ENCODE measurements at regions of chr7 and their contacts with region 1.

Region 1: DNA sequence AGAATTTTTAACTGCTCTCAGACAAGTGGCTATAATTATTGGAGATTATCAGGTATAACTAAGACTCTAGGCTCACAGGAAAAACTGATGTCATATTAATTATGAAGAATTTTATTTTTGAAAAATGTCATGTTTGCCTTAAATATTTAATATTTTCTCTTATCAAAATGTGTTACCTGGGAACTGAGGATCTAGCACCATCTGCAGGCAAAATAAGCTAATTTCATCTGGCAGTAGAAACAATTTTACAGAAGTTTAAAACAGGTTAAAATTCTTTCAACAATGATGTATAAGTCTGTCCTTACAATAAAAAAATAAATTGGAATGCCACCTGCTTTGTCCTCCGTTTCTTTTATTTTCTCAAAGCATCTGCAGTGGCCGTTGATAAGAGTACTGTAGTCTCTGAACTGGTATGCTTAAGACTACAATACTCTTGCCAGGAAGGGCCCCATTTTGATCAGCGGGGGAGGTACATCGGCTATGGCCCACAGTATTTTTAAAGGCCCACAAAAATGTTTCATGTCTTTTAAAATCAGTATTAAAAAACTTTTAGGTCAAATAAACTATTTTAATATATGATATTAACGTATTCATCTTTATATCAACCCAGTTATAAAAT is 81.3 kb downstream of the VWDE start:
- DNase-seq: peak in 4 of 14 experiments; percentile 33 to 65 (median 56)
- ATAC-seq: no peak
- H3K4me3 ChIP-seq: no peak overlapping the region
- H3K4me3 Mint-ChIP-seq: no peak overlapping the region
- H3K27ac ChIP-seq: no peak overlapping the region
- H3K27ac Mint-ChIP-seq: no peak overlapping the region
- H3K4me1 ChIP-seq: no peaks in the 10 kb centered on the region
- H3K4me1 Mint-ChIP-seq: no peaks in the 10 kb centered on the region
- H3K27me3 ChIP-seq: no peaks in the 10 kb centered on the region
- H3K27me3 Mint-ChIP-seq: no peaks in the 10 kb centered on the region
- CTCF ChIP-seq: peak; percentile 86

Region 2: DNA sequence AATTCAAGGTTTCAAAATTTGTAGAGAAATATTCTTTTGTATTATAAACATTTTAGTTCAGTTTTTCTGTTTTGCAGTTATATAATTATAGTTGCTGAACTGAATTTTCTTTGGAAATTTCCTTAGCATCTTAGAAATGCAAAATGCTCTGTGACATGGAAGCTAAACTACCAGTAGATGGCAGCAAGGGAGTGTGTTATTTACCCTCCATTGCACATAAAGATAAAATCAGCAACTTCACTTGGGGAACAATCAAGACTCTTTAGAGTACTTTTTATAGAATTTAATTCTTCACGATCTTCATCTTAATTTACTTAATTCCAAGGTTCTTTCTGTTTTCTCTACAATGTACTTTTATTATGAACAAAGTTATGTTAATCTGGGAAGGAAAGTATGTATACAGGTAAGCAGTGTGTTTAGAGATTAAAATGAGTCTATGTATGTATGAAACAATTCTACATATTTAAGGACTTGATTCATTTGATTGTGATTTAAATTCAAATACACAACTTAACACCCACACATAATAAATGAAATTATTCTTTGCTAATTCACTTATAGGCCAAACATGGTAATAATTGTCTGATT is 894.6 kb before region 1 on chr7:
- CTCF ChIA-PET with region 1: no interaction called
- POLR2A ChIA-PET with region 1: no interaction called
- intact Hi-C with region 1: loop called in 1 of 2 experiments (anchors 5 kb)
- DNase-seq: peak in 3 of 14 experiments; percentile 13 to 45 (median 34)
- ATAC-seq: no peak
- H3K4me3 ChIP-seq: no peak overlapping the region
- H3K4me3 Mint-ChIP-seq: no peak overlapping the region
- H3K27ac ChIP-seq: no peak overlapping the region
- H3K27ac Mint-ChIP-seq: no peak overlapping the region
- H3K4me1 ChIP-seq: no peaks in the 10 kb centered on the region
- H3K4me1 Mint-ChIP-seq: no peaks in the 10 kb centered on the region
- H3K27me3 ChIP-seq: no peaks in the 10 kb centered on the region
- H3K27me3 Mint-ChIP-seq: no peaks in the 10 kb centered on the region
- CTCF ChIP-seq: no peak

Region 3: DNA sequence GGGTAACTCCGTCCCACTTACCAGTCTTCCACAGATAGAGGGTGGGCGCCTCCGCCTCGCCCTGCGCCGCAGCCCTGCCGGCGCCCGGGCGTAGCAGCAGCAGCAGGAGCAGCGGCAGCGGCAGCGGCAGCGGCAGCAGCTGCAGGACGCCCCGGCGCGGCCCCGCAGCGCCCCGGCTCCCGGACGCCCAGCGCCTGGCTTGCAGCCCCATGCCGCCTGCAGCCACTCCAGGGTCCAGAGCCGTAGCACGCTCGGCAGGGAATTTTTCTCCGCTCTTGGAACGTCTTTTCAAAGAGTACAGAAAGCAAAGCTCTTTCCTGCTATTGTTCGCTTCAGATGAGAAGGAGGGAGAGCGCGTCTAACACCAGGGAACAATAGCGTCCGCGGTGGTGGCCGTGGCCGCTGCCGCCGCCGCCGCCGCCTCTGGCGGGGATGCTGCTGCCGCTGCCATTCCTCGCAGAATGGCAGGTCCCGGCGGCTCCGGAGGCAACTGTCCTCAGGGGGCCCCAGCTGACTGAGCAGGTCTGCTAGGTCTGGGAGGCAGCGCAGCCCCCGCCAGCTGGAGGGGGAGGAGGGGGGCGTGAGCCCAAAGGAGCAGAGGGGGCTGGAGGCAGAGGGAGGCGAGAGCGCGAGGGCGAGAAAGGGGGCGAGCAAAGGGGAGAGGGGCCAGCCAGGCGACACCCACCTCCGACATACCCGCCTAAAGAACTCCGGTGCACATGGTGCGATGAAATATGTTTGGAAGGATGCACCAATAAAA is 490.5 kb before region 1 on chr7 and contains the start of gene THSD7A:
- CTCF ChIA-PET with region 1: no interaction called
- POLR2A ChIA-PET with region 1: no interaction called
- intact Hi-C with region 1: loop called in 1 of 2 experiments (anchors 10 kb)
- DNase-seq: peak in 2 of 14 experiments; percentile 2 to 15
- ATAC-seq: no peak
- H3K4me3 ChIP-seq: no peak within 1 kb of the TSS
- H3K4me3 Mint-ChIP-seq: peak within 1 kb of the TSS; percentile 1
- H3K27ac ChIP-seq: no peak within 1 kb of the TSS
- H3K27ac Mint-ChIP-seq: no peak within 1 kb of the TSS
- H3K4me1 ChIP-seq: peaks cover 2% of the 10 kb centered on the region
- H3K4me1 Mint-ChIP-seq: peaks cover 10% of the 10 kb centered on the region
- H3K27me3 ChIP-seq: peaks cover 6 to 29% of the 10 kb centered on the region in 2 experiments
- H3K27me3 Mint-ChIP-seq: peaks cover 48% of the 10 kb centered on the region
- CTCF ChIP-seq: no peak
- total RNA-seq, gene THSD7A: not detected

Region 4: GRCh38 chr7:12211054-12211710 is 111.2 kb before region 1 on chr7 and contains the start of gene TMEM106B:
- CTCF ChIA-PET with region 1: interaction called, 7 read pairs
- POLR2A ChIA-PET with region 1: interaction called, 10 read pairs
- intact Hi-C with region 1: loop called (anchors 1 to 5 kb)
- DNase-seq: peak; percentile 92 to 100 (median 96)
- ATAC-seq: peak; percentile 87
- H3K4me3 ChIP-seq: peak within 1 kb of the TSS; percentile 82
- H3K4me3 Mint-ChIP-seq: peak within 1 kb of the TSS; percentile 99
- H3K27ac ChIP-seq: peak within 1 kb of the TSS; percentile 93 to 98
- H3K27ac Mint-ChIP-seq: peak within 1 kb of the TSS; percentile 100
- H3K4me1 ChIP-seq: peaks cover 19% of the 10 kb centered on the region
- H3K4me1 Mint-ChIP-seq: peaks cover 47% of the 10 kb centered on the region
- H3K27me3 ChIP-seq: no peaks in the 10 kb centered on the region
- H3K27me3 Mint-ChIP-seq: no peaks in the 10 kb centered on the region
- CTCF ChIP-seq: peak; percentile 59
- total RNA-seq, gene TMEM106B: 16.9 to 17.5 TPM

Region 5: GRCh38 chr7:12291870-12292269 is 30.5 kb before region 1 on chr7:
- CTCF ChIA-PET with region 1: no interaction called
- POLR2A ChIA-PET with region 1: no interaction called
- intact Hi-C with region 1: no loop called
- DNase-seq: peak in 4 of 14 experiments; percentile 6 to 40 (median 18)
- ATAC-seq: no peak
- H3K4me3 ChIP-seq: no peak overlapping the region
- H3K4me3 Mint-ChIP-seq: no peak overlapping the region
- H3K27ac ChIP-seq: no peak overlapping the region
- H3K27ac Mint-ChIP-seq: no peak overlapping the region
- H3K4me1 ChIP-seq: no peaks in the 10 kb centered on the region
- H3K4me1 Mint-ChIP-seq: no peaks in the 10 kb centered on the region
- H3K27me3 ChIP-seq: no peaks in the 10 kb centered on the region
- H3K27me3 Mint-ChIP-seq: peaks cover 5% of the 10 kb centered on the region
- CTCF ChIP-seq: peak; percentile 17